ENCODE measurements at regions of chr6 and their contacts with region 1.

Region 1: GRCh38 chr6:85360794-85361642 is 88.9 kb upstream of the NT5E start:
- DNase-seq: peak; percentile 93
- H3K4me3 ChIP-seq: no peak overlapping the region
- H3K27me3 ChIP-seq: no peaks in the 10 kb centered on the region
- CTCF ChIP-seq: no peak

Region 2: DNA sequence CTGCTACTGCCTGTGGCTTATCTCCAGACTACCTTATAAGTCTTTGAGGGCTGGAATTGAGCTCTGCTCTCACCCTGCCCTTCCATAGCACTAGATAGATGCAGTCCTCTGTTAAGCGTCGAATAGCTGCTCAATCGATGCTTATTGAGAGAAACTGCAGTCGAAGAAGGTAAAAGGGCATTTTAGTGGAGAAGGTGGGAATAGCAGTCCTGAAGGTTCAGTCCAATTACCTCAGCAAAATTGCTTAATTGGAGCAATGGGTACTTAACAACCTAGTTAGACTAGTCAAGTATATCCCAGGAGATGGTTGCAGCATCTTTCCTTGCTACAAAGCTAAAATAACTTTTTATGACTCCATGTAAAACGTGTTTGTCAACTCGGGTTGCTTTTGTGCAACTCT is 22.0 kb after region 1 on chr6:
- CTCF ChIA-PET with region 1: no interaction called
- POLR2A ChIA-PET with region 1: no interaction called
- DNase-seq: no peak
- H3K4me3 ChIP-seq: no peak overlapping the region
- H3K27me3 ChIP-seq: no peaks in the 10 kb centered on the region
- CTCF ChIP-seq: no peak

Region 3: DNA sequence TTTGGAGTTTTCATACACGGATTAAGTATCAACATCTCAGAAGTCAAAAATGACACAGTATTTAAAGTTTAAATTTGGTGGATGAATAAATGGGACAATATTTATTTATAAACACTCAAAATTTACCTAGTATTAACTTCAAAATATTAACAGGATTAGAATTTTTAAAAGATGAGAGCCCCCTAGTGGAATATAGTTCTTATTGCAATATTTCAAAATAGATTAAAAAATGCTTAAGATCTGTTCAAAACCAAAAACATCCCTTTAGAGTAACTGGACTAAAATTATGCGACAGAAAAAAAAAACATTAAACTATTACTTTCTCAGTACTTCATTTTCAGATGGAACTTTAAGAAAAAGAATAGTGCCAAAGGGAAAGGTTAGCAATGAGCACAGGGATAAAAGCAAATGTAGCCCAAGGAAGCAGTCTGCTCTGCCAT is 176.1 kb after region 1 on chr6:
- CTCF ChIA-PET with region 1: interaction called, 11 read pairs
- POLR2A ChIA-PET with region 1: no interaction called
- DNase-seq: no peak
- H3K4me3 ChIP-seq: no peak overlapping the region
- H3K27me3 ChIP-seq: no peaks in the 10 kb centered on the region
- CTCF ChIP-seq: peak; percentile 36

Measured in BJ (cell line).